BJ (cell line): ENCODE measurements at regions of chr9 and their contacts with region 1.

Region 1: DNA sequence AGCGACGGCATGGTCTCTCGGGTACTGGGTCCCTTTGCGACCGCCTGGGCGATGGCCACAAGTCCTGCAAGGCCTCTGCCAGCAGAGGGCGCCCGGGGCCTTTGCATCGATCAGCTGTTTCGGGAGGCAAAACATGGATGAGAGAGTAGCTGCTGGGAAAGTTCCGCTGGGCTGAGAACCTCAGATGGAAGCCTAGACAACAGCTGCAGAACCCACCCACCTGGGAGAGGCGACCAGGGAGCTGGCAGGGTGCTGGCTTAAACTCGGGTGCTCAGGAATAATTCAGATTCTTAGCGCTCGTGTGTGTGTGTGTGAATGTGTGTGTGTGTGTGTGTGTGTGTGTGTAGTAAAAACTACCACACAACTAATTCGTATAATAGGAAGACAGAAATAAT is 50.0 kb downstream of the TRIM32 start:
- DNase-seq: no peak
- H3K4me3 ChIP-seq: no peak overlapping the region
- H3K27me3 ChIP-seq: peaks cover 1% of the 10 kb centered on the region; the same call in 1 of the 2 replicates
- CTCF ChIP-seq: peak; percentile 99

Region 2: DNA sequence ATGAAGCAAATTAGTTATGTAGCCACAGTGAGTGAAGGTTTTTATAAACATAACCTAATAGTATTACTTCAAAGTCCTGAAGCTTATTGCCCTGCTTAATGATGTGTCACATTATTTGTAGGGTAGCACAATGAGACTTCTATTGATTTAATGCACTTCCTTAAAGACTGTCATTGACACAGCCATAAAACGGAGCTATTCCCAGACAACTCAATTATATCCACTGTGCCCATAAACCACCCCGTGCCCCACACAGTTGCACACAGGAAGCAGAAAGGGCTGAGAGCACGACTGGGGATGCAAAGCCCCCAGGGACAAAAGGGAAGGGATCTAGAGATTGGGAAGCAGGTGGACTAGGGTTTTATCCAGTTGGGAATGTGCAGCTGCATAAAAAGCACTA is 13.0 kb before region 1 on chr9:
- CTCF ChIA-PET with region 1: interaction called, 75 read pairs
- POLR2A ChIA-PET with region 1: no interaction called
- DNase-seq: no peak
- H3K4me3 ChIP-seq: no peak overlapping the region
- H3K27me3 ChIP-seq: peaks cover 1% of the 10 kb centered on the region; the same call in 1 of the 2 replicates
- CTCF ChIP-seq: no peak

Region 3: DNA sequence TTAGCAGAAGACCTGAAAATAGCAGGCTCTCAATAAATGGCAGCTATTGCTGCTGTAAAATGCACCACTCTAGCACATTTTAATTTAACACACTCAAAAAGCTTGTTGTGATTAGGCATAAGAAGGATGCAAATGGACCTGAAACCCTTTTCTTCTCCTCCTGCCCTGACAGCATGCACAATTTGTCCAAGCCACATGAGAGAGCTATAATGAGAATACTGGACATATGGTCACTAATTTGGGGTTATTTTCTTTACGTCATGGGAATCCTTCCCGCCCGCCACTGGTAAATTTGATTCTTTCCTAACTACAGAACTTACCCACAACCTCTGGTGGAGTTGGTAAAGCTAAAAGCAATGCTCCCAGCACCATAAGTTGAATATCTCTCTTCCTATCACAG is 12.0 kb after region 1 on chr9:
- CTCF ChIA-PET with region 1: interaction called, 35 read pairs
- POLR2A ChIA-PET with region 1: no interaction called
- DNase-seq: no peak
- H3K4me3 ChIP-seq: no peak overlapping the region
- H3K27me3 ChIP-seq: no peaks in the 10 kb centered on the region
- CTCF ChIP-seq: no peak

Region 4: DNA sequence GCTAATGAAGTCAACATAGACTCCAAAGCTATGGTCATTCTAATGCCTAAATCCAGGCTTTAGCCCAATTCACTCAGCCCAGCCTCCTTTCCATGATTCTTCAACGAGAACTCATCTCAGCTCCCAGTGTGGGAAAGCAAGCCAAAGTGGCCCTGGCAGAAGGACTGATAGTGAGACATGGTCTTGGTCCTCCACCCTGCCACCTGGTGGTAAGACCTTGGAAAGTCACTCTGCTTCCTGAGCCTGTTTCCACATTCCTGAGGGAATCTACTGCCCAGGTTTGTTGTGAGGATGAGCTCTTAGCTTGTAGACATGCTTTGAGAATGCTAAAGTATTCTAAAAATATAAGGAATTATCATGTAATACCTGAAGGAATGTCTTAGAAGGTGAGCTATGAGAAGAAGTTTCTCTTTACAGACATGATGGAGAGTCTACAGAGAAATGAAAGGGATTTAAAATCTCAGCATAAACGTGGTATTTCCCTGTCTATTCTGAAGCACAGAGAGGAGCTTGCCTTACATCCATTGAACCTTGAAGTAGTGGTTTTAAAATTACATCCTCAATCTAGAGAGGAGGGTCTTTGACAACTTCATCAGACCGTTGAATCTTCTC is 123.5 kb after region 1 on chr9:
- CTCF ChIA-PET with region 1: interaction called, 126 read pairs
- POLR2A ChIA-PET with region 1: interaction called, 4 read pairs
- DNase-seq: peak; percentile 4
- H3K4me3 ChIP-seq: no peak overlapping the region
- H3K27me3 ChIP-seq: no peaks in the 10 kb centered on the region
- CTCF ChIP-seq: peak; percentile 87

Region 5: DNA sequence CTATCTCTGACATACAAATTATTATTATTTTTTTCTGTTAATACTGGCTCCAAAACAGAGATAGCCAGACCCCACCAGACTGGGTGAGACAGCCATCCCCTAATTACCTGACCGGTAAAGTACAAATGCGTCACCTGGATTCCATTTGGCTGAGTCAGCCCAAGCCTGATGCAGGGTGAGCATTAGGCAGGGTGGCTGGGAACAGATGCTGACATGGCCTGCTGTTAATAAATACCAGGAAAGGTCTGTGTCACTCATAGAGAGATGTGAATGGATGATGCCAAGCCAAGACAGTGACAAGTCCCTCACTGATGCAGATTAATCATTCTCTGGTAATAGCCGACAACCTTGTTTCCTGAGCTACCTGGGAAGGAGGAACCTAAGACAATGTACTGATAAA is 133.4 kb after region 1 on chr9:
- CTCF ChIA-PET with region 1: interaction called, 18 read pairs
- POLR2A ChIA-PET with region 1: no interaction called
- DNase-seq: no peak
- H3K4me3 ChIP-seq: no peak overlapping the region
- H3K27me3 ChIP-seq: no peaks in the 10 kb centered on the region
- CTCF ChIP-seq: no peak

Region 6: DNA sequence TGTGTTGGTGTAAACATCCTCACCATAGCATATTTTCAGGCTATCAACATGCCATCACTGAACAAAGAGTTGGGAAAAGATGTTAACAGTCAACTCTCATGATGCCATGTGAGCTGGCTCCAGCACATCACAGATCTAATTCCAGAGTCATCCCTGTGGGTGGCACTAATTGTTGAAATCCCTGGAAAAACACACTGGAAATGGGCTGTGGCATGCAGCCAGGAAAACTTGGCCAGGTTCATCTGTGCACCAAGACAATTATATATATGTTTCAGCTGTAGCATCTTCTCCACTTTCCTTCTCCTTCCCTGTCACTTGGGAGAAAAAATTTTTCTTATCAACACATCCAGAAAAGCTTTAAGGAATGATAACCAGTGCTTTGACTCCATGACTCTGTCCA is 263.7 kb after region 1 on chr9:
- CTCF ChIA-PET with region 1: no interaction called
- POLR2A ChIA-PET with region 1: no interaction called
- DNase-seq: no peak
- H3K4me3 ChIP-seq: no peak overlapping the region
- H3K27me3 ChIP-seq: no peaks in the 10 kb centered on the region
- CTCF ChIP-seq: no peak

Region 7: DNA sequence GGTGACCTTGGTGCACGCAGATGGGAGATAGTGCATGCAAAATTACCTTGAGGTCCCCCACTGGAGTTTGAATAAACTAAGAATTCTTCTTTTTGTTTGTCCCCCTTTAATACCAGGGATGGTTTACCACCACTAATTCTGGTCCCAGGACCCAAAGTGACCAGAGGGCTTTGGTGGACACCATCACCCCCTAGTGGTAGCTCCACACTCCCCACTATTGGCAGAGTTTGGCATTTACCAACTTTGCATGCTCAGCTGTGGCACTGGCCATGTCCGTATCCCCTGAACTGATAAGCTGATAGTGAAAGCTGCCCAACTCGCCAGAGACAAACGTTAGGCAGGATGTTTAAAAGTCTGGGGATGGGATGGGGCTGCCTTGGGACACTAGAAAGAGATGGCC is 674.4 kb after region 1 on chr9:
- CTCF ChIA-PET with region 1: interaction called, 16 read pairs
- POLR2A ChIA-PET with region 1: no interaction called
- DNase-seq: no peak
- H3K4me3 ChIP-seq: no peak overlapping the region
- H3K27me3 ChIP-seq: peaks cover 30% of the 10 kb centered on the region
- CTCF ChIP-seq: peak; percentile 65